ENCODE measurements at regions of chr7 and their contacts with region 1.

Region 1: GRCh38 chr7:55365675-55366460 is 731 bp downstream of the LANCL2 start:
- DNase-seq: peak; percentile 91 to 96 (median 91)
- ATAC-seq: peak; percentile 94
- H3K4me3 ChIP-seq: peak overlapping the region; percentile 95
- H3K27ac ChIP-seq: peak overlapping the region; percentile 98
- H3K4me1 ChIP-seq: peaks cover 4 to 19% of the 10 kb centered on the region in 2 experiments; a peak in 4 of 5 replicates
- H3K27me3 ChIP-seq: peaks cover 0 to 6% of the 10 kb centered on the region in 2 experiments; a peak in 1 of 5 replicates
- CTCF ChIP-seq: peak; percentile 37 to 62 (median 40); a peak in 5 of 6 replicates
- EP300 ChIP-seq: no peak; the same call in 1 of the 2 replicates
- POLR2A ChIP-seq: peak; percentile 91
- RAD21 ChIP-seq: peak in 1 of 2 experiments; percentile 34; a peak in 1 of 4 replicates

Region 2: GRCh38 chr7:54960517-54960916 is 405.4 kb before region 1 on chr7:
- CTCF ChIA-PET with region 1: no interaction called
- POLR2A ChIA-PET with region 1: no interaction called
- in situ Hi-C with region 1: no loop called
- intact Hi-C with region 1: no loop called
- DNase-seq: no peak
- ATAC-seq: no peak
- H3K4me3 ChIP-seq: no peak overlapping the region
- H3K27ac ChIP-seq: no peak overlapping the region
- H3K4me1 ChIP-seq: no peaks in the 10 kb centered on the region
- H3K27me3 ChIP-seq: peaks cover 0 to 6% of the 10 kb centered on the region in 2 experiments; a peak in 2 of 5 replicates
- CTCF ChIP-seq: no peak
- EP300 ChIP-seq: no peak
- POLR2A ChIP-seq: no peak
- RAD21 ChIP-seq: no peak

Region 3: GRCh38 chr7:55349121-55349520 is 16.7 kb before region 1 on chr7:
- CTCF ChIA-PET with region 1: no interaction called
- POLR2A ChIA-PET with region 1: interaction called, 10 read pairs
- in situ Hi-C with region 1: no loop called
- intact Hi-C with region 1: no loop called
- DNase-seq: no peak
- ATAC-seq: no peak
- H3K4me3 ChIP-seq: no peak overlapping the region
- H3K27ac ChIP-seq: no peak overlapping the region
- H3K4me1 ChIP-seq: peaks cover 6 to 9% of the 10 kb centered on the region in 2 experiments; a peak in 2 of 5 replicates
- H3K27me3 ChIP-seq: peaks cover 2 to 7% of the 10 kb centered on the region in 2 experiments; a peak in 1 of 5 replicates
- CTCF ChIP-seq: no peak
- EP300 ChIP-seq: no peak
- POLR2A ChIP-seq: no peak
- RAD21 ChIP-seq: no peak

Region 4: GRCh38 chr7:55415173-55415778 is 49.4 kb after region 1 on chr7:
- CTCF ChIA-PET with region 1: no interaction called
- POLR2A ChIA-PET with region 1: no interaction called
- in situ Hi-C with region 1: no loop called
- intact Hi-C with region 1: loop called (anchors 2 kb)
- DNase-seq: peak; percentile 69 to 79 (median 72)
- ATAC-seq: peak; percentile 93
- H3K4me3 ChIP-seq: no peak overlapping the region
- H3K27ac ChIP-seq: no peak overlapping the region
- H3K4me1 ChIP-seq: 0 out of 5 replicates have a peak, but pooled peaks cover 0 to under 1% of the 10 kb centered on the region in 2 experiments
- H3K27me3 ChIP-seq: no peaks in the 10 kb centered on the region
- CTCF ChIP-seq: peak; percentile 73 to 78 (median 77)
- EP300 ChIP-seq: no peak
- POLR2A ChIP-seq: no peak
- RAD21 ChIP-seq: peak; percentile 73 to 75

Region 5: GRCh38 chr7:55572378-55573233 is 206.7 kb after region 1 on chr7 and contains the start of gene VOPP1:
- CTCF ChIA-PET with region 1: no interaction called
- POLR2A ChIA-PET with region 1: no interaction called
- in situ Hi-C with region 1: no loop called
- intact Hi-C with region 1: loop called (anchors 5 kb)
- DNase-seq: peak; percentile 81 to 95 (median 94)
- ATAC-seq: peak; percentile 83
- H3K4me3 ChIP-seq: peak within 1 kb of the TSS; percentile 83
- H3K27ac ChIP-seq: peak within 1 kb of the TSS; percentile 82
- H3K4me1 ChIP-seq: peaks cover 18 to 35% of the 10 kb centered on the region in 2 experiments
- H3K27me3 ChIP-seq: no peaks in the 10 kb centered on the region
- CTCF ChIP-seq: no peak
- EP300 ChIP-seq: no peak
- POLR2A ChIP-seq: peak; percentile 3; the same call in 1 of the 2 replicates
- RAD21 ChIP-seq: no peak
- polyA plus RNA-seq, gene VOPP1: 8.2 to 11.0 TPM

Region 6: DNA sequence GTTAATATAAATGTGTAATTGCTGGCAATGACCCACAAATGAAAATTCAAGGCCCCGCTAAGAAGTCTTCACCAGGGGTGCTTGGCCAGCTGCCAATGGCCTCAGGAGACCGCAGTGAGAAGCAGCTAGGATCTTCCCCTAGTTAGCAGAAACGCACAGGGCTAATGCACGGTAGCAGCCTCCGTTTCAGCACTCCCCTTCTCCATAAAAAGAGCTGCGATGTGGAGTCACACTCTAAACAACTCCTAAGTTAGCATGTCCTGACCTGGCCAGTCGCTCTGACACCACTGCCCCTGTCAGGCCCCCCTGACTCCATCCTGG is 357.7 kb after region 1 on chr7:
- CTCF ChIA-PET with region 1: no interaction called
- POLR2A ChIA-PET with region 1: no interaction called
- in situ Hi-C with region 1: no loop called
- intact Hi-C with region 1: no loop called
- DNase-seq: no peak
- ATAC-seq: no peak
- H3K4me3 ChIP-seq: no peak overlapping the region
- H3K27ac ChIP-seq: no peak overlapping the region
- H3K4me1 ChIP-seq: no peaks in the 10 kb centered on the region
- H3K27me3 ChIP-seq: no peaks in the 10 kb centered on the region
- CTCF ChIP-seq: no peak
- EP300 ChIP-seq: no peak
- POLR2A ChIP-seq: no peak
- RAD21 ChIP-seq: no peak

Measured in K562 (cell line).